AG04449 (cell line): ENCODE measurements at regions of chr12 and their contacts with region 1.

Region 1: DNA sequence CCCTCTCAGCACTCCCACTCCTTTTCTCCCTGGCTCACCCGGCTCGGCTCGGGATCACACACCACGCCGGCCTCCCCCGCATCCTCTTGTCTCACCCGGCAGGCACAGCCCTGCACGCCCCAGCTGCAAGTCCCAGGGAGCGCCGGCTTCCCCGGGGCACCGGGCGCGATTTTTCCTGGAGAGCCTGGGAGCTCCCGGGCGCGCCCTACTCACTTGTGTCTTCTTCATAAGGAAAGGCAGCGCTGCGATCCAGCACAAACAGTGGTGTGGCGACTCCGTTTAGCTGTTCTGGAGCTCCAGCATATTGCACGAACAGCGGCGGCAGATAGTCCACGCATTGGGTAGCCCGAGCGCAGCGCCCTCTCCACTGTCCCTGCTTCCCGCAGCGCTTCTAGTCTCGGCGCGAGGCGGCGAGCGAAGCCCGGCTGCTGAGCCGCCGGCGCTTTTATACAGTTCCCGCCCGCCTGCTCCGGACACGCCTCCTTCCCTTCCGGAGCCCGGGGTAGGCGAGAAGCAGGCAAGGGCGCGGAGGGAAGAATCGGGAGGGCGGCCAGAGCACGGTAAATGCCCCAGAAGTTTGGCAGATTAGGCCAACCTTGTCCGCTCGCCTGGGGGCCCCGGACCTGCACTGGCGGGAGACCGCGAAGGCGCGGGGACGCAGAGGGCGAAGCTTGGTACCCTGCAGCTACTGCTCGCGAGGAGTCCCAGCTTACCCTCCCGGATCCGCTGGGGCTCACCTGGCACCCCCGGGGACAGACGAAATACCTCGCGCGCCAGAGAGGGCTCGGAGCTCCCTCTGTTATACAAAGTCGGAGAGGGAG is at the start of gene KITLG:
- DNase-seq: no peak
- H3K4me3 ChIP-seq: peak within 1 kb of the TSS; percentile 84
- CTCF ChIP-seq: peak; percentile 48

Region 2: GRCh38 chr12:88153959-88154358 is 426.3 kb before region 1 on chr12:
- CTCF ChIA-PET with region 1: interaction called, 18 read pairs
- POLR2A ChIA-PET with region 1: no interaction called
- DNase-seq: no peak
- H3K4me3 ChIP-seq: no peak overlapping the region
- CTCF ChIP-seq: no peak

Region 3: GRCh38 chr12:88393017-88393767 is 187.1 kb before region 1 on chr12:
- CTCF ChIA-PET with region 1: no interaction called
- POLR2A ChIA-PET with region 1: no interaction called
- DNase-seq: no peak
- H3K4me3 ChIP-seq: no peak overlapping the region
- CTCF ChIP-seq: no peak

Region 4: GRCh38 chr12:88570103-88570502 is 10.2 kb before region 1 on chr12:
- CTCF ChIA-PET with region 1: interaction called, 15 read pairs
- POLR2A ChIA-PET with region 1: interaction called, 5 read pairs
- DNase-seq: no peak
- H3K4me3 ChIP-seq: no peak overlapping the region
- CTCF ChIP-seq: no peak